Heart right ventricle (tissue), 16 donors: ENCODE measurements at regions of chr2 and their contacts with region 1.

Region 1: DNA sequence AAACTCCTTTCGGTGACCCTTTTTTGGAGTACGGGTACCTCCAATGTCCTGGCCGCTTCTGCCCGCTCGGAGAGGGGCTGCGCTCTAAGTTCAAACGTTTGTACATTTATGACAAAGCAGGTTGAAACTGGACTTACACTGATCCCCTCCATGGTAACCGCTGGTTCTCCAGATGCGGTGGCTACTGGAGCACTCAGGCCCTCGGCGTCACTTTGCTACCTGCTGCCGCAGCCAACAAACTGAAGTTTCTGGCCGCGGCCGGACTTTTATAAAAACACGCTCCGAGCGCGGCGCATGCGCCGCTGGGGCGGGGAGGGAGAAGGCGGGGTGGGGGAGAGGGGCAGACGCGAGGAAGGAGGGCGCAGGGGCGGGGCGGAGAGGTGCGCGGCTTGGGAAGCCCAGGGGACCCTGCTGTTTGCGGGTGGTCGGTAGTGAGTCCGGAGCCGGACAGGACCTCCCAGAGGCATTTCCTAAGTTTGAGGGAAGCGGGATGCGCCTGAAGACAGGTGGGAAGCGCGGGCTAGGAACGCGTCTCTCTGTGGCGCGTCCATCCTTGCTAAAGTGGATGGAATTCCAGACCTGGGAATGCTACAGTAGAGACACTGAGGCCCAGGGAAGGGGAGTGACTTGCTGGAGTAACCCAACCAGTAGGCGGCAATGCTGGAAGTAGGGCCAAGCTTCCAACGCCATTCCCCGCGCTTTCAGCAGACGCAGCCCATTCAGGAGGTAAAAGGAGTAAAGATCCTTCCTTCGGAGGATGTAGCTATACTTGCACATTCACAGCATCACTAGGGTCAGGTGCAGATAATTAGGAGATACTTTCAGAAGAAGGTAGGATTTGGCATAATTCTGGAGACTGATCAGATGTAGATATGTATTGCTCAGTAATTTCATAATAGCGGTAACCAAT is at the start of gene CXCR4:
- DNase-seq: peak; percentile 76
- ATAC-seq: peak; percentile 50 to 84 (median 74)
- H3K4me3 ChIP-seq: peak within 1 kb of the TSS; percentile 42 to 74 (median 60)
- H3K27ac ChIP-seq: peak within 1 kb of the TSS in 9 of 10 donors; percentile 14 to 94 (median 39)
- H3K4me1 ChIP-seq: peaks cover 0 to 65% (median 27%) of the 10 kb centered on the region in 9 donors
- H3K27me3 ChIP-seq: peaks cover 0 to 67% (median 42%) of the 10 kb centered on the region in 7 donors
- CTCF ChIP-seq: peak in 4 of 9 donors; percentile 10 to 36 (median 24)
- total RNA-seq, gene CXCR4: 1.5 to 24.0 (median 4.9) TPM

Region 2: DNA sequence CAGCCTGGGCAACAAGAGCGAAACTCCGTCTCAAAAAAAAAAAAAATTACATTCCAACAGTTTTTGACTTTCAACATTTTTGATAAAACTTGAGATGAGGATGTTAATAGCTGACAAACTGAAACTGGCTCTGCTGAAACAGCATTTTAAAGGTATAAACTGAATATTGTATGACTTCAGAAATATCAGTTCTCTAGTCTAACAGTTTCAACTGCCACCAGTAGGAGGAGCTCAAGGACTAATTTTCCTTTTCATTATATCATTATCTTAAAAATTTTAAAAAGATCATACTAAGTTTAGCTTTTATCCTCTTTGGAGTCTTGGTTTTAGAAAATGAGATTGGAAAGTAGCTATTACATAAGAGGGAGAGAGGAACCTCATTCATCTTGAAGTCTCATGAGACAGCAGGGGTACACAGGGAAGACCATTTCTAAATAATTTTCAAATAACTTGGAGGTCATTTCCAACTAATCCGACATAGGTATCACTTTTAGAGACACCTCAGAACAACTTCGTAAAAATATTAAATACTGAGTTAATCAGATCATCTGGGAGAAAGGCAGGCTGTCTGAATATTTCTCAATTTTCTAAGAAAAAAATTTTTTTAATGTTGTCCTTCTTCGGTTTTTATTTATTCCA is 204.3 kb before region 1 on chr2:
- intact Hi-C with region 1: loop called in 3 of 10 experiments (anchors 5 to 10 kb)
- DNase-seq: peak in 1 of 2 donors; percentile 29
- ATAC-seq: peak in 1 of 8 donors; percentile 21
- H3K4me3 ChIP-seq: no peak overlapping the region
- H3K27ac ChIP-seq: peak overlapping the region in 1 of 10 donors; percentile 6
- H3K4me1 ChIP-seq: no peaks in the 10 kb centered on the region
- H3K27me3 ChIP-seq: no peaks in the 10 kb centered on the region
- CTCF ChIP-seq: peak; percentile 55 to 86 (median 78)

Region 3: GRCh38 chr2:135985018-135985825 is 132.9 kb before region 1 on chr2 and contains the start of gene DARS1:
- intact Hi-C with region 1: loop called in 2 of 10 experiments (anchors 10 kb)
- DNase-seq: peak; percentile 94 to 95
- ATAC-seq: peak; percentile 97 to 99 (median 98)
- H3K4me3 ChIP-seq: peak within 1 kb of the TSS; percentile 75 to 98 (median 90)
- H3K27ac ChIP-seq: peak within 1 kb of the TSS; percentile 88 to 100 (median 98)
- H3K4me1 ChIP-seq: peaks cover 0 to 53% (median 37%) of the 10 kb centered on the region in 9 donors
- H3K27me3 ChIP-seq: no peaks in the 10 kb centered on the region
- CTCF ChIP-seq: no peak
- total RNA-seq, gene DARS1: 53.7 to 74.3 (median 65.7) TPM

Region 4: DNA sequence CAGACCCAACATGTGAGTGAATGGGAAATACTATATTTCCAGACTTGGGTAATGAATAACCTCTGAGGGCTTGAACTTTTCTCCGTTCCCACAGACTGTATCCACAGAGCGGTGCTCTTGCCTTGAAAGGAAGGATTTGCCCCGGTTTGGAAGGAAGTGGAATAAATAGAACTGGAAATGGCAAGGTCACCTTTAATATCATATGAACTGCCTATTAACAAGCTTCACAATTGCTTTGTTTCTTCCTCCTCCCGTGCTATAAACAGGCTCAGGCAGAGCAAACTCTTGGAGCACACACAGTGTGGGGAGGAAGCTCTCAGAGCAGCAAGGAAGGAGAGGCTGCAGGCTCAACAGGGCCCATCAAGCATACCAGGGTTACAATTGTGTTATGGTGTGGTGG is 104.2 kb before region 1 on chr2:
- intact Hi-C with region 1: loop called in 2 of 10 experiments (anchors 5 kb)
- DNase-seq: peak in 1 of 2 donors; percentile 30
- ATAC-seq: peak; percentile 65 to 96 (median 80)
- H3K4me3 ChIP-seq: no peak overlapping the region
- H3K27ac ChIP-seq: peak overlapping the region in 8 of 10 donors; percentile 1 to 78 (median 60)
- H3K4me1 ChIP-seq: peaks cover 5 to 62% (median 36%) of the 10 kb centered on the region in 9 donors
- H3K27me3 ChIP-seq: no peaks in the 10 kb centered on the region
- CTCF ChIP-seq: peak in 5 of 9 donors; percentile 11 to 53 (median 22)

Region 5: GRCh38 chr2:136025057-136025973 is 92.8 kb before region 1 on chr2:
- intact Hi-C with region 1: loop called in 1 of 10 experiments (anchors 10 kb)
- DNase-seq: peak; percentile 78
- ATAC-seq: peak; percentile 95 to 99 (median 98)
- H3K4me3 ChIP-seq: peak overlapping the region in 6 of 10 donors; percentile 12 to 38 (median 27)
- H3K27ac ChIP-seq: peak overlapping the region in 5 of 10 donors; percentile 19 to 66 (median 61)
- H3K4me1 ChIP-seq: peaks cover 0 to 27% (median 13%) of the 10 kb centered on the region in 9 donors
- H3K27me3 ChIP-seq: no peaks in the 10 kb centered on the region
- CTCF ChIP-seq: no peak

Region 6: GRCh38 chr2:136238286-136239078 is 120.3 kb after region 1 on chr2:
- intact Hi-C with region 1: loop called in 1 of 10 experiments (anchors 10 kb)
- DNase-seq: no peak
- ATAC-seq: peak; percentile 22 to 80 (median 64)
- H3K4me3 ChIP-seq: no peak overlapping the region
- H3K27ac ChIP-seq: peak overlapping the region in 7 of 10 donors; percentile 35 to 94 (median 50)
- H3K4me1 ChIP-seq: peaks cover 0 to 64% (median 15%) of the 10 kb centered on the region in 9 donors
- H3K27me3 ChIP-seq: no peaks in the 10 kb centered on the region
- CTCF ChIP-seq: no peak

Region 7: GRCh38 chr2:136378712-136379595 is 260.8 kb after region 1 on chr2:
- intact Hi-C with region 1: loop called in 4 of 10 experiments (anchors 5 to 10 kb)
- DNase-seq: peak; percentile 27 to 41
- ATAC-seq: peak; percentile 49 to 79 (median 70)
- H3K4me3 ChIP-seq: no peak overlapping the region
- H3K27ac ChIP-seq: peak overlapping the region in 1 of 10 donors; percentile 14
- H3K4me1 ChIP-seq: peaks cover 0 to 49% (median 4%) of the 10 kb centered on the region in 9 donors
- H3K27me3 ChIP-seq: peaks cover 0 to 4% (median 0%) of the 10 kb centered on the region in 7 donors
- CTCF ChIP-seq: peak; percentile 16 to 86 (median 74)